Heart left ventricle (tissue), 16 donors: ENCODE measurements at regions of chr11 and their contacts with region 1.

Region 1: DNA sequence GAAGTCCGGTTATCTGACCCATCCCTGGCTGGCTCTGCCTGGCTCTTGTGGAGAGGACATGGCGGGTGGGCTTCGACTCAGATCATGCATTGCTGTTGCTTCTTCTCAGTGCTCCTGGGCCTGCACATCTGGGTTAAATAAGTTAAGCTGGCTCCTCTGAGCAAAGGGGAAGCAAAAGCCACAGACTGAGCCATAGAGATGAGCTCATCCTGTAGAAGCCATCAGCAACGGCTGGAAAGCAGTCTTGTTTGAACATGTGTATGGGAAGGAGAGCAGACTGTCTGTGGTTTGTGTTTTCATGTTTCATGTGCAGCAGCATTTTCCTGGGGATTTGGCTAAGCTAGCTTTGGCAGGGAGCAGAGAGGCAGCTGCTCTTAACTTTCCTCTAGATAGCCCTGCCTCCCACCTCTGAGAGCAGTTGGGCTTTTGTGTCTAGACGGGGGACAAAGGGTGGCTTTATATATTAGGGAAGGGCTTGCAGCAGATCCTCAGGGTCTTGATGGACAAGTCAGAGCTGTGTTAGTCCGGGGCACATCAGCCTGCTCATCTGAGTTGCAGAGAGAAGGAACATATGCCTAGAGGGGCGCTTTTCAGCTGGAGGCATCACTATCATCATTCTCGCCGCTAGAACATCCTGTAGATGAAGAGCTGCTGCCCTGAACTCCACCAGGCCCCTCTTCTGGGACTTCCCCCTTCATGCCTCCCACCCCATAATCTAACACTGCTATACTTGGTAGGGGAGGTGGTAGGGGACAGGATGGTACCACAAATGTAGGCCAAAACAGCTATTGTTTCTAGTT is 14.9 kb downstream of the DCPS start:
- DNase-seq: peak in 4 of 5 donors; percentile 59 to 73 (median 62)
- ATAC-seq: peak; percentile 60 to 89 (median 86)
- H3K4me3 ChIP-seq: peak overlapping the region in 6 of 12 donors; percentile 3 to 44 (median 22)
- H3K27ac ChIP-seq: peak overlapping the region; percentile 73 to 93 (median 82)
- H3K4me1 ChIP-seq: peaks cover 7 to 45% (median 27%) of the 10 kb centered on the region in 12 donors
- H3K27me3 ChIP-seq: no peaks in the 10 kb centered on the region
- CTCF ChIP-seq: no peak
- POLR2A ChIP-seq: peak in 1 of 2 donors; percentile 19

Region 2: GRCh38 chr11:126391970-126392639 is 73.3 kb after region 1 on chr11:
- intact Hi-C with region 1: loop called in 1 of 10 experiments (anchors 5 kb)
- DNase-seq: peak in 3 of 5 donors; percentile 54 to 74 (median 68)
- ATAC-seq: peak; percentile 29 to 70 (median 54)
- H3K4me3 ChIP-seq: no peak overlapping the region
- H3K27ac ChIP-seq: peak overlapping the region; percentile 47 to 93 (median 74)
- H3K4me1 ChIP-seq: peaks cover 12 to 74% (median 49%) of the 10 kb centered on the region in 12 donors
- H3K27me3 ChIP-seq: no peaks in the 10 kb centered on the region
- CTCF ChIP-seq: peak in 7 of 12 donors; percentile 14 to 53 (median 28)
- POLR2A ChIP-seq: no peak

Region 3: GRCh38 chr11:126416542-126417090 is 97.8 kb after region 1 on chr11:
- intact Hi-C with region 1: loop called in 5 of 10 experiments (anchors 5 to 10 kb)
- DNase-seq: peak; percentile 90 to 96 (median 93)
- ATAC-seq: peak; percentile 69 to 88 (median 84)
- H3K4me3 ChIP-seq: peak overlapping the region in 11 of 12 donors; percentile 16 to 61 (median 49)
- H3K27ac ChIP-seq: peak overlapping the region; percentile 69 to 93 (median 86)
- H3K4me1 ChIP-seq: peaks cover 3 to 80% (median 61%) of the 10 kb centered on the region in 12 donors
- H3K27me3 ChIP-seq: no peaks in the 10 kb centered on the region
- CTCF ChIP-seq: no peak
- POLR2A ChIP-seq: peak in 1 of 2 donors; percentile 62

Region 4: GRCh38 chr11:126544108-126545056 is 225.6 kb after region 1 on chr11:
- intact Hi-C with region 1: no loop called
- DNase-seq: no peak
- ATAC-seq: no peak
- H3K4me3 ChIP-seq: no peak overlapping the region
- H3K27ac ChIP-seq: no peak overlapping the region
- H3K4me1 ChIP-seq: no peaks in the 10 kb centered on the region
- H3K27me3 ChIP-seq: peaks cover 0 to 20% (median 0%) of the 10 kb centered on the region in 9 donors
- CTCF ChIP-seq: no peak
- POLR2A ChIP-seq: no peak